ENCODE measurements at regions of chr17 and their contacts with region 1.

Region 1: GRCh38 chr17:82457997-82458864 is at the start of gene NARF:
- DNase-seq: peak; percentile 95 to 100 (median 99)

Region 2: DNA sequence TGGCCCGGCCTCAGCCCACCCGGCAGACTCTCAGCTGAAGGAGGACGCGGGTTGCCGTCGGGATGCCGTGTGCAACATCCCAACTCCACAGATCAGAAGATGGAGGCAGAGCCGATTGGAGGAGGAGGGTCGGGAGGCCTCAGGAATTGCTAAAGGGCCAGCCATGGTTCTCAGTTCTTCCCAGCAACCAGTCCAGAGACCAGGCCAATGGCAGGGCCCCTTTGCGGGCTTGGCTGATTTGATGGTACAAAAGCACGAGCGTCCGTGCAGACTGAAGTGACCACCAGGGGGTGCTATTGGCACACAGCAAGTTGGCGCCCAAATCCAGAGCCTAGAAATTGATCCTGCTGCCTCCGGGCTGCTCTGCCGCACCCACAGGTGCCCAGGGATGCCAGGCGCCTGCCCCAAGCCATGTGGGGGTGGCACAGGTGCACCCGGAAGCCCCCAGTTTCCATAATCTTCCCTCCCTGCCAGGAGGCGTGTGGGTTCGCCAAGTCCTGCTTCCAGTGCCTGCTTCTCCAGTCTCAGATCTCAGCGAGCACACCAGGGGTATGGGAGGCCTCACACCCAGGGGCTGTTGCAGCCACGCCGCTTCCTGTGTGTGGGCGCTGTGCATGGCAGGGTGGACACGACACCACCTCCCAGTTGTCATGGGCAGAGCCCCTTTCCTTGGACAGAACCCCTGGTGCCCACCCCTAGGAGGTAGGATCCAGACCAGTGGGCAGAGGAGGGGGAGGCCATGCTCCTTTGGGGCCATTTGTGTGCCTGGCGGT is 106.3 kb before region 1 on chr17:
- intact Hi-C with region 1: no loop called
- DNase-seq: peak; percentile 63 to 96 (median 86)

Region 3: GRCh38 chr17:82440991-82441627 is 17.1 kb before region 1 on chr17:
- intact Hi-C with region 1: no loop called
- DNase-seq: peak in 1 of 10 donors; percentile 80

Region 4: DNA sequence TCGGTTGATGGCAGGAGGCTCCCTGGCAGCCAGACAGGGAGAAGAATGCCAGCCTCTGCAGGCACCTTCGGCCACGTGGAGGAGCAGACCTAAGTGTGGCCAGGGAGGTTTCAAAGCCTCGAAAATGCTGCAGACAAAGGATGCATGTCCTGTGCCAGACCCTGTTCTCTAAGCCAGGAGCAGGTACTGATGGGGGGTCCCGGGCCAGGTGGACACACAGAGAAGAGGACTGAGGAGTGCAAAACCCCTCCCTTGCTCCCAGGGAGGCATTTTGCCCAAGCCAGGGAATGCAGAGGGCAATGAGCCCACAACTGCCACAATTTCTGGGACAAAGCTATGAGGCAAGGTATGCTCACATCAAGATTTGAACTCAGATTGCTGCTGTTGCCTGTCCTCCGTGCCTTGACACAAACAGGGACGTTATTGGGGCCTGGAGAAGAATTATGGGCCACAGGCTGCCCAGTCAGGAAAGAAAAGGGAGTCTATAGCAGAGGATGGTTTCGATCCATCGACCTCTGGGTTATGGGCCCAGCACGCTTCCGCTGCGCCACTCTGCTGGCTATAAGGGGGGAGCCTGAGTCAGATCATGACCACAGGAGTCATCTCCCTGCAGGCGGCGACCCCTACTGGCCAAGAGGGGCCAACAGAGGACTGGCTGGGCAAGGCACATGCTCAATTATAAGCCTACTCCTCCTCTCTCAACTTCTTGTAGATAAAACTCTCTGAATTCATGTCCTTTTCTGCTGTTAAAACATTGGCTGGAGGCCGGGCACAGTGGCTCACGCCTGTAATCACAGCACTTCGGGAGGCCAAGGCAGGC is 36.2 kb after region 1 on chr17:
- intact Hi-C with region 1: loop called (anchors 5 kb)
- DNase-seq: peak; percentile 82 to 98 (median 89)

Region 5: GRCh38 chr17:82781894-82782274 is 323.7 kb after region 1 on chr17:
- intact Hi-C with region 1: no loop called
- DNase-seq: peak; percentile 61 to 97 (median 83)

Measured in posterior cingulate gyrus (tissue), 11 donors.